Pancreas (tissue), 10 donors: ENCODE measurements at regions of chr4 and their contacts with region 1.

Region 1: GRCh38 chr4:112099701-112100297 is 45.5 kb upstream of the FAM241A start:
- DNase-seq: no peak
- ATAC-seq: peak in 3 of 4 donors; percentile 90 to 91 (median 91)
- H3K4me3 ChIP-seq: no peak overlapping the region
- H3K27ac ChIP-seq: no peak overlapping the region
- H3K4me1 ChIP-seq: no peaks in the 10 kb centered on the region
- H3K27me3 ChIP-seq: no peaks in the 10 kb centered on the region
- CTCF ChIP-seq: peak; percentile 37 to 53 (median 48)

Region 2: GRCh38 chr4:112231779-112232713 is 132.2 kb after region 1 on chr4 and contains the start of gene AP1AR:
- intact Hi-C with region 1: loop called in 1 of 3 experiments (anchors 10 kb)
- DNase-seq: peak; percentile 72 to 91 (median 81)
- ATAC-seq: peak; percentile 69 to 87 (median 76)
- H3K4me3 ChIP-seq: peak within 1 kb of the TSS; percentile 89 to 97 (median 96)
- H3K27ac ChIP-seq: peak within 1 kb of the TSS; percentile 92 to 97 (median 96)
- H3K4me1 ChIP-seq: peaks cover 0 to 16% (median 0%) of the 10 kb centered on the region in 3 donors
- H3K27me3 ChIP-seq: no peaks in the 10 kb centered on the region
- CTCF ChIP-seq: peak in 1 of 4 donors; percentile 7
- total RNA-seq, gene AP1AR: 5.5 to 11.4 (median 8.9) TPM

Region 3: DNA sequence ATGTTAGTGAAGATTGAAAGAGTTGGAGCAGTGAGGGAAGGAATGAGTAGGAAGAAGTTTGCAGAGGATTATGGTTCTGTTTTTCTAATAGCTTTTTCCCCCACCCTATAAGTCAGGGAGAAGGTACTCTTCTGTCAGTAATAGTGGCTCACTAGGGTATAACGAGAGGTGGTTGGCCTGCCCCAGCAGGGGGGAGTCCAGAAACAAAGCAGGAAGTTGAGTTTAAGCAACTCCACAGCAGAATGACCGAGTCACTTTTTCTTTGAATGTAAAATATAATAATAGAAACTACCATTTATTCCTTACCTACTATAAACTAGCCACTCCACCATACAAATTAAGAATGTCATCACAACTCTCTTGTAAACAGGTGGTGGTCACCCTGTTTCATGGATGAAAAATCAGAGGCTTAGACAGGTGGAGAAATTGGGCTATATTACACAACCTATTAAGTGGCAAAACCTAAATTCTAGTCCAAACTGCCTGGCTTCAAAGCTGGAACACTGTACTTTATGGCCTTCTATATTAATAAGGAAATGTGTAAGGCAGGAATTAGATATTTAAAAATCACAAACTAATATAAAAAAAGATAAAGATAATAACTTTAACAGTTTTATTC is 153.7 kb after region 1 on chr4:
- intact Hi-C with region 1: loop called in 1 of 3 experiments (anchors 5 kb)
- DNase-seq: no peak
- ATAC-seq: no peak
- H3K4me3 ChIP-seq: no peak overlapping the region
- H3K27ac ChIP-seq: no peak overlapping the region
- H3K4me1 ChIP-seq: peaks cover 7 to 14% (median 11%) of the 10 kb centered on the region in 3 donors
- H3K27me3 ChIP-seq: no peaks in the 10 kb centered on the region
- CTCF ChIP-seq: no peak